CD4-positive, alpha-beta T cell (primary cell): ENCODE measurements at regions of chr12 and their contacts with region 1.

Region 1: DNA sequence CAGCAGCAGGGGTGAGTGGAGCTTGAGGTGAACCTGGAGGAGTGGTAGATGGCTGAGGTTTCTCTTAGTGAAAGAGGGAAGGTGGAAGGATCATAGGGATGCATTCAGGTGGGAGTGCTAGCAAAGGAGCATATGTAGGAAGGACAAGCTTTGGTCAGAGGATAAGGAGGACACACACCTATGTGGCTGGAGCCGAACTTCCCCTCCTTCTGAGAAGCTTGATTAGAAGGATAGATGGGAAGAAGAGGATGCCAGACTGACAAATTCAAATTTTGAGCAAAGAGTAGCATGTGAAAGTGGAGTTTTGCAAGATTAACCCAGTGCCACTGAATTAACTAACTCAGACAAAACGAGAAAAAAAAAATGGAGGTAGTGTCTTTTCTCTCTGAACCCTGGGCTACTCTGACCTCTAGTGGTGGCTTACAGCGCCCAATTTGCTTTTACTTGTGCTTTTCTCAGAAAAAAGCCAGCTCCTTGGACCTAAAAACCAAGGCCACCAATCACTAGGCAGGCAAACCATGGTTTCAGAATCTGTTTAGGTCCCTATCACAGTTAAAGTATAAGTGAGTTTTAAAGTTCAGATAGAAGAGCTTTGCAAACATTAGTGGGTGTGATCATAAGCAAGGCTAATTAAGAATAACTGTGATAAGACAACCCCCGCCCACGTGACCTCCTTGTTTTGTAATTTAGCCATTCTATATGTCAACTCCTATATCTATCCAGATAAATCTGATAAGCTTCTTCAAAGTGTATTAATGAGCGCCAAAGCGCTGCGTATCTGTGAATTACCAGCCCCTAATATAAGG is 15.5 kb downstream of the EMP1 start:
- DNase-seq: peak; percentile 55 to 87 (median 66)
- ATAC-seq: peak; percentile 84
- H3K4me3 ChIP-seq: no peak overlapping the region
- H3K4me3 Mint-ChIP-seq: no peak overlapping the region
- H3K27ac ChIP-seq: no peak overlapping the region
- H3K27ac Mint-ChIP-seq: no peak overlapping the region
- H3K4me1 ChIP-seq: peaks cover 6% of the 10 kb centered on the region
- H3K4me1 Mint-ChIP-seq: peaks cover 7% of the 10 kb centered on the region
- H3K27me3 ChIP-seq: no peaks in the 10 kb centered on the region
- H3K27me3 Mint-ChIP-seq: no peaks in the 10 kb centered on the region
- CTCF ChIP-seq: peak; percentile 89

Region 2: DNA sequence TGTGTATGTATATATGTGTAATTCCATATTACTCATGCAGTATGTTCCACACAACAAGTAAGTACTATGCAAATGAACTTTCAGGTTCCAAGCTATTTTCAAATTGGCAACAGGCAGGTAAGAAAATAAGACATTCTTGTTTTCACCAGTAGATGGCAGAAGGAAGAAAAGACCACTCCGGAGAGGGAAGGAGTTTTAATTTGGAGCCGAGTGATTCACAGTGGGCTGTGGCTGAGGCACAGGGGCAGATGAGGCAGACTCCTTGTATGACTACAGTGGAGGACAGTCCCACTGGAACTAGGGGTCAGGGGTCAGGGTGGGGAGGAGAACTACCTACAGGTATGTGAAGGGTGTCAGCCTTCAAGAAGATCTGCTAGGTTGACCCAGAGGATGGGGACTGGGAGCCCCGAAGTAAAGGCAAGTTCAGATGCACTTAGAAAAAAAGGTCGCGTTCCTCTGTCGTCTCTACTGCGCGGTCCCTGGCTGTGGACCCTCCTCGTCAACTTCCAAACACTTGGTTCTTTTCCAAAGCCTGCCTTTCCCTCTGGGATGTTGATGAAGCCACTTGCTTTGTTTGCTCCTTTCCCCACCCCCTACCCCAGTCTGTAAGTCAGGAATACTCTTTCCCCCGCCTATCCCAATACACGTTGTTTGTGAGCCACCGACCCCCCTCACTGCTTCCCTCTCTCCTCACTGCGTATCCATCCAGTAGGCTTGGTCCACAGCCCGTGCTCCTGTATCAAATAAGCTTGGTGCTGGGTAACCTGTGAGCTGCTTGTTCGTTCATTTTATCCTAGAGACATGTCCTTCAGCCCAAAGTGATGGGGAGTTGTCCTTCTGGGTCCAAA is 374.8 kb before region 1 on chr12:
- CTCF ChIA-PET with region 1: interaction called, 3 read pairs
- POLR2A ChIA-PET with region 1: no interaction called
- intact Hi-C with region 1: loop called (anchors 1 to 5 kb)
- DNase-seq: peak in 11 of 14 experiments; percentile 5 to 68 (median 36)
- ATAC-seq: peak; percentile 72
- H3K4me3 ChIP-seq: no peak overlapping the region
- H3K4me3 Mint-ChIP-seq: peak overlapping the region; percentile 30
- H3K27ac ChIP-seq: no peak overlapping the region
- H3K27ac Mint-ChIP-seq: peak overlapping the region; percentile 92
- H3K4me1 ChIP-seq: peaks cover 4% of the 10 kb centered on the region
- H3K4me1 Mint-ChIP-seq: peaks cover 34% of the 10 kb centered on the region
- H3K27me3 ChIP-seq: no peaks in the 10 kb centered on the region
- H3K27me3 Mint-ChIP-seq: no peaks in the 10 kb centered on the region
- CTCF ChIP-seq: peak; percentile 69

Region 3: DNA sequence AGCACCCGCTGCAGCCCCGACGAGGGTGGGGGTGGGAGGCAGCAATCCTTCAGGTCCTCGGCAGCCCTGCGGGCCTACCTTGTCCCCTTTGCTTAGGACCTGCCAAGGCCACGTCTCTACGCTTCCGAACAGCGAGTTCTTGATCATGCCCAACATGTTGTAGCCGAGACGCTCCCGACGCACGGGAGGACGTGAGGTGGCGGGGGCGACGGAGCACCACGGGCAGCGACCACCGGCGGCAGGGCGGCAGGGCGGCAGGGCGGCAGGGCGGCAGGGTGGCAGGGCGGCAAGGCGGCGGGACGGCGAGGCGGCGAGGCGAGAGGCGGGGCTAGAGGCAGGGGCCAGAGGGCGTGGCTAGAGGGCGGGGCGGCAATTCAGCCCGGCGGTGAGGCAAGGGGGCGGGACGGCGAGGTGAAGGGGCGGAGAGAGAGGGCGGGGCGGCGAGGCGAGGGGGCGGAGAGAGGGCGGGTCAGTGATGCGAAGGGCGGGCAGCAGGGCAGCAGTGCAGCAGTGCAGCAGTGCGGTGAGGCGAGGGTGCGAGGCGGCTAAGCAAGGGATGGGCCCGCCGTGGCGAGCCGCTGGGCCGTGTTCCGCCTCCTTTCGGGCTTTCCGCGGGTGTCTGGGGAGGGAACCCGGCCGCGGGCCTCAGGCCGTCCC is 212.0 kb before region 1 on chr12 and contains the start of gene HEBP1:
- CTCF ChIA-PET with region 1: no interaction called
- POLR2A ChIA-PET with region 1: no interaction called
- intact Hi-C with region 1: loop called (anchors 5 kb)
- DNase-seq: peak; percentile 92 to 98 (median 96)
- ATAC-seq: peak; percentile 87
- H3K4me3 ChIP-seq: peak within 1 kb of the TSS; percentile 95
- H3K4me3 Mint-ChIP-seq: peak within 1 kb of the TSS; percentile 93
- H3K27ac ChIP-seq: peak within 1 kb of the TSS; percentile 32 to 45
- H3K27ac Mint-ChIP-seq: peak within 1 kb of the TSS; percentile 89
- H3K4me1 ChIP-seq: peaks cover 29% of the 10 kb centered on the region
- H3K4me1 Mint-ChIP-seq: peaks cover 42% of the 10 kb centered on the region
- H3K27me3 ChIP-seq: peaks cover 0 to 3% of the 10 kb centered on the region in 2 experiments
- H3K27me3 Mint-ChIP-seq: no peaks in the 10 kb centered on the region
- CTCF ChIP-seq: no peak
- total RNA-seq, gene HEBP1: 11.9 to 12.5 TPM

Region 4: GRCh38 chr12:13094347-13094746 is 117.7 kb before region 1 on chr12:
- CTCF ChIA-PET with region 1: interaction called, 50 read pairs
- POLR2A ChIA-PET with region 1: interaction called, 4 read pairs
- intact Hi-C with region 1: loop called (anchors 1 kb)
- DNase-seq: peak in 2 of 14 experiments; percentile 52 to 61
- ATAC-seq: no peak
- H3K4me3 ChIP-seq: no peak overlapping the region
- H3K4me3 Mint-ChIP-seq: no peak overlapping the region
- H3K27ac ChIP-seq: no peak overlapping the region
- H3K27ac Mint-ChIP-seq: no peak overlapping the region
- H3K4me1 ChIP-seq: peaks cover 16% of the 10 kb centered on the region
- H3K4me1 Mint-ChIP-seq: peaks cover 19% of the 10 kb centered on the region
- H3K27me3 ChIP-seq: no peaks in the 10 kb centered on the region
- H3K27me3 Mint-ChIP-seq: no peaks in the 10 kb centered on the region
- CTCF ChIP-seq: no peak

Region 5: GRCh38 chr12:13100882-13101769 is 110.9 kb before region 1 on chr12:
- CTCF ChIA-PET with region 1: interaction called, 50 read pairs
- POLR2A ChIA-PET with region 1: interaction called, 9 read pairs
- intact Hi-C with region 1: loop called (anchors 1 kb)
- DNase-seq: peak; percentile 87 to 98 (median 92)
- ATAC-seq: peak; percentile 87
- H3K4me3 ChIP-seq: peak overlapping the region; percentile 64
- H3K4me3 Mint-ChIP-seq: peak overlapping the region; percentile 87
- H3K27ac ChIP-seq: peak overlapping the region; percentile 93 to 94
- H3K27ac Mint-ChIP-seq: peak overlapping the region; percentile 94
- H3K4me1 ChIP-seq: peaks cover 38% of the 10 kb centered on the region
- H3K4me1 Mint-ChIP-seq: peaks cover 53% of the 10 kb centered on the region
- H3K27me3 ChIP-seq: no peaks in the 10 kb centered on the region
- H3K27me3 Mint-ChIP-seq: no peaks in the 10 kb centered on the region
- CTCF ChIP-seq: no peak

Region 6: GRCh38 chr12:13196130-13196921 is 15.7 kb before region 1 on chr12 and contains the start of gene EMP1:
- CTCF ChIA-PET with region 1: interaction called, 10 read pairs
- POLR2A ChIA-PET with region 1: interaction called, 3 read pairs
- intact Hi-C with region 1: no loop called
- DNase-seq: peak; percentile 20 to 89 (median 68)
- ATAC-seq: peak; percentile 91
- H3K4me3 ChIP-seq: peak within 1 kb of the TSS; percentile 46
- H3K4me3 Mint-ChIP-seq: peak within 1 kb of the TSS; percentile 83
- H3K27ac ChIP-seq: no peak within 1 kb of the TSS
- H3K27ac Mint-ChIP-seq: peak within 1 kb of the TSS; percentile 70
- H3K4me1 ChIP-seq: peaks cover 18% of the 10 kb centered on the region
- H3K4me1 Mint-ChIP-seq: peaks cover 21% of the 10 kb centered on the region
- H3K27me3 ChIP-seq: no peaks in the 10 kb centered on the region
- H3K27me3 Mint-ChIP-seq: no peaks in the 10 kb centered on the region
- CTCF ChIP-seq: no peak
- total RNA-seq, gene EMP1: 9.0 to 9.1 TPM

Region 7: DNA sequence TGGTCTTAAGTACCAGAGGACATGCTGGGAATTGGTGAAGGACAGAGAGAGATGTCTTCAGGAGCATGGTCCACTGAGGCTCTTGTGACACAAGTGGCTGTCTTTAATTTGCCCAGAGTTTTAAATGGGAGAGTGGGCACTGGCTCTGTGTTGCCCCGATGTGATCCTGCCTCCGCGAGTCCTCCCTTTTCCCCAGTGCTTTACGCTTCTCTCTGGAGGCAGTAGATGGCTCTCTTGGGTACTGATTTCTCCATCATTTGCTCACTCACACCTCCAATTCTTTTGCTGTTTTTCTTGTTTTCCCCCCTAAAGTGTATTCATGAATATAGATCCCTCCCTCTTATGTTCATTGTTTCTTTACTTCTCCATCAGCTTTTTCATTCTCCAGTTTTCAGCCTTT is 58.8 kb after region 1 on chr12:
- CTCF ChIA-PET with region 1: no interaction called
- POLR2A ChIA-PET with region 1: no interaction called
- intact Hi-C with region 1: no loop called
- DNase-seq: no peak
- ATAC-seq: no peak
- H3K4me3 ChIP-seq: no peak overlapping the region
- H3K4me3 Mint-ChIP-seq: no peak overlapping the region
- H3K27ac ChIP-seq: no peak overlapping the region
- H3K27ac Mint-ChIP-seq: no peak overlapping the region
- H3K4me1 ChIP-seq: no peaks in the 10 kb centered on the region
- H3K4me1 Mint-ChIP-seq: no peaks in the 10 kb centered on the region
- H3K27me3 ChIP-seq: peaks cover 9 to 15% of the 10 kb centered on the region in 2 experiments
- H3K27me3 Mint-ChIP-seq: peaks cover 43% of the 10 kb centered on the region
- CTCF ChIP-seq: no peak